ENCODE measurements at regions of chr2 and their contacts with region 1.

Region 1: GRCh38 chr2:102020596-102021181 is 28.9 kb downstream of the IL1R2 start:
- H3K4me3 ChIP-seq: no peak overlapping the region
- H3K27ac ChIP-seq: no peak overlapping the region
- H3K4me1 ChIP-seq: no peaks in the 10 kb centered on the region
- CTCF ChIP-seq: peak; percentile 79

Region 2: GRCh38 chr2:101972621-101973434 is 47.9 kb before region 1 on chr2:
- CTCF ChIA-PET with region 1: no interaction called
- POLR2A ChIA-PET with region 1: no interaction called
- H3K4me3 ChIP-seq: no peak overlapping the region
- H3K27ac ChIP-seq: no peak overlapping the region
- H3K4me1 ChIP-seq: no peaks in the 10 kb centered on the region
- CTCF ChIP-seq: no peak

Region 3: DNA sequence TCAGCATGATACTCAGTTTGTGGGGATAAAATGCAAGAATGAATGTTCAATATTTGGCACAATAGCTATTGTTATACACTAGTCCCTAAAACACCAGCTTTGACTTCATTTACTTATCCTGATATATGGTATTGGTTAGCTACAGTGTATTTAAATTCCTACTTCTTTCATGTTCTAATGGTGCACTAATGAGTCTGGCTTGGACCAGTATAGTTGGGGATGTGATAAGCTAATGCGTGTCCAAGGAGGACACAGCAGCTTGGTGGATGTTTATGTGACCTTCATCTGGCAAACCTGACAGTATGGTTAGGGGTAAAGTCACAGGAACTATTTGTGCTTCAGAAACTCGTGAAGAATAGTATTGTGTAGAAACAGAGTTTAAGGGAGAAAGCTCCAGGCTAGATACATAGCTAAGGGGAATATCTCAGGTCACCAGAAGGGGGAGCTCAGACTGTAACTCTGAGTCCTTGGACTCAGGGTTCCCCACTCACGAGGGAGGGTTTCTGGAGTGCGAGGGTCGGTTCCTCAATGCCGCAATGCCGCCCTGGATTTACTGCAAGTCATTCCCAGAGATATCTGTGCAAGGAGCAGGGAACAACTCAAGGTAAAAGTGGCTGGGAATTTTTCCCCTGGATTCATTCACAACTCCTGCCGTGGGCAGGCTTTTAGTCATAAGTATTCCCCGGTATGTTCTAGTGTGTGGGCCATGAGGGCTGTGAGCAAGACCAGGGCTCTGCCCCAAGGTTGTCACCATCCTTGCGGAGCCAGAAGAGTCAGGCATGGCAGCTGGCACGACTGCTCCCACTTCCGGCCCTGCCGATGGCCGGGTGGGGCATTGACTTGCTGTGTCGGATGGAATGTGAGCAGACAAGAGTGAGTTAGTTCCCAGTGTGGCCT is 14.5 kb before region 1 on chr2:
- CTCF ChIA-PET with region 1: interaction called, 26 read pairs
- POLR2A ChIA-PET with region 1: no interaction called
- H3K4me3 ChIP-seq: no peak overlapping the region
- H3K27ac ChIP-seq: no peak overlapping the region
- H3K4me1 ChIP-seq: no peaks in the 10 kb centered on the region
- CTCF ChIP-seq: peak; percentile 19; the same call in 1 of the 2 replicates

Region 4: DNA sequence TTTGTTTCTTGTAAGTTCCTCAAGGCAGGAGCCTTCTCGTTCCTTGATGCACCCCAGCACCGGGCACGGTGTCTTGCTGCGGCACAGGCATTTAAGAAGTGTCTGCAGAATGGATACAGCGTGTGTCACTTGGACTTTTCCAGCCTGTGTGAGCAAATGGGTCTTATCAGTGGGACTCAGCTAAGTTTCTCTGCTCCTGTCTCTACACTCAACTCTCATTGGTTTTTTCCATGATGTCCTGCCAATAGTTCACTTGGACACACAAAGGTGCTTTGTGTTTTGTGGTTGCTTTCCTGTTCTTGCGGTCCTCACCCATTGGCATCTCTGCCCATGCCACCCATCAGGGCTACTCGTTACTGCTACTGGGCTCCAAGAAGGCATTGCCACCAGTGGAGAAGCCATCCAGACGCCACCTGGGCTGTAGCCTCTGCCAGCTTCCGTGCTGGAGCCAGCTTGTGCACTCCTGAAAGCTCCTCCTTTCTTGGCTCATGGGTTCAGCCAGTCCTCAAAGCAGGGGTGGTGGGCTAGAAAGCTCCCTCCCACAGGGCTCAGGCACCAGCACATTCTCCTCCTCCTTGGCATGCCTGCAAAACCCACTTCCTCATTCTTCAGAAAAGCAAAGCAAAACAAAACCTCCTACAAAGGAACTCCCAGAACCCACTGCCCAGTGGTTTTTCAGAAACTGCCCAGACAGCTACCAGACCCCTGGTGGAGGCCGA is 12.5 kb after region 1 on chr2:
- CTCF ChIA-PET with region 1: interaction called, 14 read pairs
- POLR2A ChIA-PET with region 1: no interaction called
- H3K4me3 ChIP-seq: no peak overlapping the region
- H3K27ac ChIP-seq: no peak overlapping the region
- H3K4me1 ChIP-seq: no peaks in the 10 kb centered on the region
- CTCF ChIP-seq: no peak

Region 5: GRCh38 chr2:102240640-102241370 is 220.1 kb after region 1 on chr2:
- CTCF ChIA-PET with region 1: interaction called, 75 read pairs
- POLR2A ChIA-PET with region 1: no interaction called
- H3K4me3 ChIP-seq: no peak overlapping the region
- H3K27ac ChIP-seq: no peak overlapping the region
- H3K4me1 ChIP-seq: no peaks in the 10 kb centered on the region
- CTCF ChIP-seq: peak; percentile 76

Region 6: DNA sequence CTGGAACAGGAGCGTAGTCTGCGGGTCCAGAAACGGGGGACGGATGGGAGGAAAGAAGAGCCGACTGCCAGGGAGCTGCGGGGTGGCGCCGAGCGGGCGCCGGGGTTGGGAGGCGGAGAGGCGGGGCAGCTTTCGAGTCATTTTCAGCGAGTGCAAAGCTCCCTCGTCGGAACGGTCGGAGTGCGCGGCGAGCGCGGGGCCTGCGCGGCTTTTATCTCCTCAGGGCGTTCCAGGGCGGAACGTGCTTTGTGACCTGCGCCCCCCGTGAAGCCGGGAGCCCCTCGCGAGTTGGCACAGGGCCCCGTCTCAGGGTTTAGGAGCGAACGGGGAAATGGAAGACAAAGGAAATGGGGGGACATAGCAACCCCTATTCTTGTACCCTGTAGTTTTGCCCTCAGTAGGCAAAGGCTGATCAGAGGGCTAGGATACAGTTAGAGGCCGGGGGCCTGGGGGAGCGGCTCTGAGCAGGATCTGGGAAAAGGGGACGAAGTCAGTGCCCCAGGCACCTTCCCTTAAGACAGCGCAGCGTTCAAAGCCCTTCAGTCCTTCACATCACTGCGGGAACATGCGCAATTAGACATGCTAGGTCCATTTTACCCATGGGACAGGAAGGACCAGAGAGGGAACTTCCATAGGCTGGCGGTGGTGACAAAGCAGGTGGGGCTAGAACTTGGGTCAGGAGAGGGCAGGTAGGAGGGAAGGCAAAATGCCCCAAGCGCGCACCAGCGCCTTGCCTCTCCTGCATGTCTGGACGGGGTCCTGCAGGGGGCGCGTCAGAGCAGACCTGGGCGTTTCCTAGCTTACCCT is 230.6 kb after region 1 on chr2:
- CTCF ChIA-PET with region 1: interaction called, 10 read pairs
- POLR2A ChIA-PET with region 1: no interaction called
- H3K4me3 ChIP-seq: no peak overlapping the region
- H3K27ac ChIP-seq: no peak overlapping the region
- H3K4me1 ChIP-seq: no peaks in the 10 kb centered on the region
- CTCF ChIP-seq: no peak

Region 7: GRCh38 chr2:102442967-102443828 is 422.5 kb after region 1 on chr2:
- CTCF ChIA-PET with region 1: interaction called, 22 read pairs
- POLR2A ChIA-PET with region 1: no interaction called
- H3K4me3 ChIP-seq: no peak overlapping the region
- H3K27ac ChIP-seq: no peak overlapping the region
- H3K4me1 ChIP-seq: no peaks in the 10 kb centered on the region
- CTCF ChIP-seq: 0 out of 2 replicates have a peak, but pooled peaks have one; percentile 12

Region 8: DNA sequence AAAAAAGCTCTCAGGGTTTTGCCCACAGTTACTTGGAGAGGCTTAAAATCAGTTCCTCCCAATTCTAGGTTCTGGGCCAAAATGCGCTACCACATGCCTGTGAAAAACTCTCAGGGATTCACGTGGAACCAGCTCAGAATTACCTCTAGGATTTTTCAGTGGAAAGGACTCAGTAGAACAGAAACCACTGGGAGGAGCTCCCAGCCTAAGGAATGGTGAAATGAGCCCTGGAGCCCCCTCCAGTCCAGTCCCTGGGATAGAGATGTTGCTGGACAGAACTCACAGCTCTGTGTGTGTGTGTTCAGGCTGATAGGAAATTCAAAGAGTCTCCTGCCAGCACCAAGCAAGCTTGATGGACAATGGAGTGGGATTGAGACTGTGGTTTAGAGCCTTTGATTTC is 431.3 kb after region 1 on chr2:
- CTCF ChIA-PET with region 1: interaction called, 13 read pairs
- POLR2A ChIA-PET with region 1: no interaction called
- H3K4me3 ChIP-seq: no peak overlapping the region
- H3K27ac ChIP-seq: no peak overlapping the region
- H3K4me1 ChIP-seq: no peaks in the 10 kb centered on the region
- CTCF ChIP-seq: no peak